Vagina (tissue), 2 donors: ENCODE measurements at regions of chr22 and their contacts with region 1.

Region 1: GRCh38 chr22:38038890-38039812 is 18.1 kb upstream of the PICK1 start:
- DNase-seq: no peak
- H3K4me3 ChIP-seq: no peak overlapping the region
- H3K27ac ChIP-seq: peak overlapping the region; percentile 30
- H3K4me1 ChIP-seq: peaks cover 14% of the 10 kb centered on the region
- H3K27me3 ChIP-seq: no peaks in the 10 kb centered on the region
- CTCF ChIP-seq: no peak
- POLR2A ChIP-seq: no peak

Region 2: DNA sequence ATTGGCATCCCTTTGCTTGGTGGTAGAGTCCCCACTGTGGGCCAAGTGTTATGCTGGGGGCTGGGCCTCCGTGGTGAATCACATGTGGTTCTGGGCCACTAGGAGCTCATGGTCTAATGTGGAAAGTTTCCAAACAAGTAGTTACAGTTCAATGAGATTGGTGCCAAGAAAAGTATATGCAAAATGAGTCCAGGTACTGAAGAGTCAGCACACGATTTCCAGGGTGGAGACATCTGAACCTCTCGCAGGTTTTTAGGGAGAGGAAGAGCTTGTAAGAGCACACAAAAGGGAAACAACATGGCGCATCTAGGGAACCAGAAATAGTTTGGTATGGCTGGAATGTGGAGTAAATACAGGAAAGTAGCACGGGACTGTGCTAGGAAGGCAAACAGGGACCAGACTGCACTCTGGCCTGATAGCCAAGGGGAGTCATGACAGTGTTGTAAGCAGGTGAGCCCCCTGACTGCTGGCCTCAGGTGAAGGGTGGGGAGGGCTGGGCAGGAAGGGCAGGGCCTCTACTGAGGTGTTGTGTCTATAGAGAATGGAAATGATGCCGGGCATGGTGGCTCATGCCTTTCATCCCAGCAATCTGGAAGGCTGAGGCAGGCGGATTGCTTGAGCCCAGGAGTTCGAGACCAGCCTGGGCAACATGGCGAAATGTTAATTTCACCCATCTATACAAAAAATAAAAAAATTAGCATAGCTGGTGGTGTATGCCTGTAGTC is 73.0 kb before region 1 on chr22:
- intact Hi-C with region 1: no loop called
- DNase-seq: no peak
- H3K4me3 ChIP-seq: no peak overlapping the region
- H3K27ac ChIP-seq: no peak overlapping the region
- H3K4me1 ChIP-seq: no peaks in the 10 kb centered on the region
- H3K27me3 ChIP-seq: no peaks in the 10 kb centered on the region
- CTCF ChIP-seq: no peak
- POLR2A ChIP-seq: no peak

Region 3: DNA sequence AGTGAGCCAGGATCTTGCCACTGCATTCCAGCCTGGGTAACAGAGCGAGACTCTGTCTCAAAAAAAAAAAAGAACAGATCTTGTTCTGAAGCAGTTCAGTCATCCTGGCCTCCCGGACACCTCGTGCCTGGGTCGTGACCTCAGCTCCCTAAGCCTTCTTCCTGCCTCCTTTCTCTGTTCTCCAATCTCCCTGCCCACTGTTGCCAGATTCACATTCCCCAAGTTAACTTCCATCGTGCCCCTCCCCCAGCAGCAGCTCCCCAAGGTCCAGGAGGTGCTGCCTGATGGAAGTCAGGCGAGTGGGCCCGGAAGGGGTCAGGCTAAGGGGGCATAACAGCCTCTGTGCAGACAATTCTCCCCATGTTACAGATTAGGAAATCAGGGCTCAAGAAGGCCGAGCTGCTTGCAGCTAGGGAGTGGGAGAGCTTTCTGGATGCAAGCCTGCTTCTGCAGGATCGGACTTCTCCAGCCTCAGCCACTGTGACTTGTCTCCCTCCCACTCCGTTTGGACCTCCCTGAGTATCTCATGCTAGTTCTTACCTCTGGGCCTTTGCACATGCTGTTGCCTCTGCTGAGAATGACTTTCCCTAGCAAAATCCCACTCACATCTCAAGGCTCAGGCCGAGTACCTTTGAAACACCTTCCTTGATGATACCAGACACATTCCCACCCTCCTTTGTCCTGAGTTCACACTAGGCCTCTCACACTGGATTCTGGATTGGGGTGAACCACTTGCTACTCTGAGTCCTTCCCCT is 247.9 kb after region 1 on chr22:
- intact Hi-C with region 1: loop called (anchors 1 kb)
- DNase-seq: no peak
- H3K4me3 ChIP-seq: no peak overlapping the region
- H3K27ac ChIP-seq: no peak overlapping the region
- H3K4me1 ChIP-seq: peaks cover 7% of the 10 kb centered on the region
- H3K27me3 ChIP-seq: no peaks in the 10 kb centered on the region
- CTCF ChIP-seq: no peak
- POLR2A ChIP-seq: no peak